ENCODE measurements at regions of chr11 and their contacts with region 1.

Region 1: DNA sequence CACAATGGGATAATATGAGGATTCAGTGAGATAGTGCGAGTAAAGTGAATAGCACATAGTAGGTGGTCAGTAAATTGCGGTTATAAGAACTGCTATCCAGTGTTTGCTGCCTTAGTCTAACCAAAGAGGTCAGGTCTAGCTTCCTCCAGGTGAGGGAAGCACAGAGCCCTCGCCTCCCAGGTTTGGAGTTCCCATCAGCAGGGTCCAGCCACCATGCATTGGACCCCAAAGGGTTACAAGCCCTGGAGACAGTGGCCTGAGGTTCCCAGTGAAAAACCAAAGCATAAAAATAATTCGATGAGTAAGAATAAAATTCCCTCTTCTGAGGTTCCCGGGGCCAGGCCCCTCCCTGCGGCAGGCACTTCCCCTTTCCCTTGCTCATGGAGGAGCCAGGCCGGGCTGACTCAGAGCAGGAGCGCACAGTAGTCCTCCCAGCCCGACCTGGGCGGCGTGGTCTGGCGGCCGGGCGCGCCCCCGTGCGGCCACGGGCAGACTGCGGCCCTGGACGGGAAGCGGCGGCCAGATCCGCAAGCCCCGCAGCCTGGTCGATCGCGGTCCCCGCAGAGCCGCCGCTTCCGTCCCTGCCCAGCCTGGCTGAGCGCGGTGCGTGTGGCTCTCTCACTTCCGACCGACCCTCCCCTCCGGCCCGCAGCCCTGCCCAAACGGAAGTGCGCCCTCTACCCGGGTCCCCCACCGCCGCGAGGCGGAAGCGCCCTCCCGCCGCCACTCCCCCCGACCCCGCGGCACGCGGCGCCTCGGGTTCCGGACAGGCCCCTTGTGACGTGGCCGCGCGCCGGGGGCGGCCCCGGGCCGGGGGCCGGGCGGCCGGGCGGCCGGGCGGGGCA is at the start of gene SLC39A13:
- DNase-seq: peak; percentile 96 to 99 (median 98)
- H3K4me3 ChIP-seq: peak within 1 kb of the TSS; percentile 50 to 80 (median 72)
- H3K27ac ChIP-seq: peak within 1 kb of the TSS; percentile 34 to 81
- H3K4me1 ChIP-seq: peaks cover 14 to 39% (median 32%) of the 10 kb centered on the region in 4 experiments
- H3K27me3 ChIP-seq: no peaks in the 10 kb centered on the region

Region 2: GRCh38 chr11:47359586-47359985 is 48.4 kb before region 1 on chr11:
- CTCF ChIA-PET with region 1: interaction called, 33 read pairs
- POLR2A ChIA-PET with region 1: interaction called, 4 read pairs
- DNase-seq: peak; percentile 74 to 96 (median 94)
- H3K4me3 ChIP-seq: peak overlapping the region in 2 of 7 experiments; percentile 13 to 28
- H3K27ac ChIP-seq: peak overlapping the region; percentile 81 to 86
- H3K4me1 ChIP-seq: peaks cover 6 to 45% (median 36%) of the 10 kb centered on the region in 4 experiments
- H3K27me3 ChIP-seq: no peaks in the 10 kb centered on the region

Region 3: DNA sequence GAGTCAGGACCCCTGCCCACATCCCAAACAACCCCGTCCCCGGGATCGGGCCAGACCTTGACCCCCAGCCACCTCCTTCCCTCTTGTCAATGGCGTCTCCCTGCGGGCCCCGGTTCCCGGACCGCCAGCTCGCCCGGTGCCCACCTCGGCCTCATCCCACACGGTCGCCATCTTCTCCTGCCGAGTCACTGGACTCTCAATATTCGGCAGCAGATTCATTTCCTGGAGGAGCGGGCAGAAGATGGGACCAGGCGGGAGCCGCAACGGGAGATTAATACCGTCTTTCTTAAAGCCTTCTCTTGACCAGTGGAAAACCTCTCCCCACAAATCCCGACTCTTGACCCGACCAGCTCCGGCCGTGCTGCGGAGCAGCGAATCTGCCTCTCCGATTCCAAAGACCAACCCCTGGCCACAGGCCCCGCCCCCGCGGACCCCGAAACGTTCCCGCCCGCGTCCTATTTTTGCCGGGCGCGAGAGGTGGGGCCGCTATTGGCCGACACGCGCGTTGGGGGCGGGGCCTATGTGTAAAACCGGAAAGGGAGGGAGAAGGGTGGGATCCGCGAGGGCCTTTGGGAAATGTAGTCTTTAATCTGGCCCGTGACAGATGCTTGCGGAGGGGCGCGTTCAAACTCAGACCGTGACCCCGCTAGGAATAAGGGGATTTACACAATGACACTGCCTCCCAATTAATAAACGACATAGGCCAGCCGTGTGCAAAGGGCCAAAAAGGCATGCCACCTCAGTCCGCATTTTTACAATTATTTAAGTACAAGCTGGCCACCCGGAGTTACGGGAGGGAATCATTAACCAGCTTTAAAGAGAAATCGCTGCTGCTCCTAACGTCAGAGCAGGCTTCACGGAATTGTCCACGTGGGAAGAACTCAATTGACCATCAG is 18.3 kb after region 1 on chr11 and contains the start of gene PSMC3:
- CTCF ChIA-PET with region 1: interaction called, 46 read pairs
- POLR2A ChIA-PET with region 1: interaction called, 5 read pairs
- DNase-seq: peak; percentile 97 to 98 (median 97)
- H3K4me3 ChIP-seq: peak within 1 kb of the TSS; percentile 66 to 100 (median 98)
- H3K27ac ChIP-seq: peak within 1 kb of the TSS; percentile 98 to 99
- H3K4me1 ChIP-seq: peaks cover 5 to 17% (median 13%) of the 10 kb centered on the region in 4 experiments
- H3K27me3 ChIP-seq: no peaks in the 10 kb centered on the region

Measured in common myeloid progenitor, CD34-positive (primary cell).